Esophagus squamous epithelium (tissue), 5 donors: ENCODE measurements at regions of chr15 and their contacts with region 1.

Region 1: GRCh38 chr15:40219801-40220200 is 19.1 kb upstream of the PAK6 start:
- DNase-seq: no peak
- H3K4me3 ChIP-seq: no peak overlapping the region
- H3K27ac ChIP-seq: no peak overlapping the region
- H3K4me1 ChIP-seq: peaks cover 0 to 6% (median 0%) of the 10 kb centered on the region in 3 donors
- H3K27me3 ChIP-seq: no peaks in the 10 kb centered on the region
- CTCF ChIP-seq: no peak
- POLR2A ChIP-seq: no peak

Region 2: DNA sequence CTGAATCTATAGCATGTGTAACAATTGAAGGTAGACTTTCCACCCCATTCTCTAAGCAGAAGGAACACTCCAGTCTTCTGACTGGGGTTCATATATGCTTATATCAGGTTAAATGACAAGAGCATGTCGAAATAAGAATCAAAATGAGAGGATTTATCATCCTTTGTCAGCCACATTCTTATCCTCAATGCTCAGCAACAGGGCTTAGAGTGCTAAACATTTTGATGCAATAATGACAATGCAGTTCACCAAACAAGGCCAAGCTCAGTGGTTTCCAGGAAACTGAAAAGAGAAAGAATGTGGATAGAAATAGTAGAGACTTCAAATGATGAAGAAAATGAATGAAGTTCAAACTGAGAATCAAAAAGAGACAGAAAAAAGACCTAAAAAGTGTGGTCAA is 515.1 kb before region 1 on chr15:
- intact Hi-C with region 1: no loop called
- DNase-seq: no peak
- H3K4me3 ChIP-seq: no peak overlapping the region
- H3K27ac ChIP-seq: no peak overlapping the region
- H3K4me1 ChIP-seq: no peaks in the 10 kb centered on the region
- H3K27me3 ChIP-seq: no peaks in the 10 kb centered on the region
- CTCF ChIP-seq: no peak
- POLR2A ChIP-seq: no peak

Region 3: GRCh38 chr15:40108855-40109735 is 110.7 kb before region 1 on chr15 and contains the start of gene BMF:
- intact Hi-C with region 1: no loop called
- DNase-seq: peak; percentile 88
- H3K4me3 ChIP-seq: peak within 1 kb of the TSS; percentile 57 to 94 (median 70)
- H3K27ac ChIP-seq: peak within 1 kb of the TSS; percentile 83 to 93 (median 88)
- H3K4me1 ChIP-seq: peaks cover 39 to 55% (median 40%) of the 10 kb centered on the region in 3 donors
- H3K27me3 ChIP-seq: peaks cover 0 to 5% (median 0%) of the 10 kb centered on the region in 4 donors
- CTCF ChIP-seq: peak in 4 of 6 experiments; percentile 12 to 41 (median 18)
- POLR2A ChIP-seq: no peak
- total RNA-seq, gene BMF: 0.31 to 4.4 (median 1.4) TPM

Region 4: GRCh38 chr15:40274350-40275274 is 54.8 kb after region 1 on chr15:
- intact Hi-C with region 1: loop called (anchors 2 kb)
- DNase-seq: peak; percentile 42
- H3K4me3 ChIP-seq: no peak overlapping the region
- H3K27ac ChIP-seq: no peak overlapping the region
- H3K4me1 ChIP-seq: peaks cover 2 to 19% (median 3%) of the 10 kb centered on the region in 3 donors
- H3K27me3 ChIP-seq: peaks cover 0 to 22% (median 2%) of the 10 kb centered on the region in 4 donors
- CTCF ChIP-seq: peak; percentile 99 to 100 (median 100)
- POLR2A ChIP-seq: no peak

Region 5: GRCh38 chr15:40323239-40323952 is 103.6 kb after region 1 on chr15 and contains the start of gene INAFM2:
- intact Hi-C with region 1: no loop called
- DNase-seq: peak; percentile 53
- H3K4me3 ChIP-seq: peak within 1 kb of the TSS; percentile 63 to 86 (median 77)
- H3K27ac ChIP-seq: peak within 1 kb of the TSS; percentile 73 to 91 (median 82)
- H3K4me1 ChIP-seq: peaks cover 19 to 57% (median 27%) of the 10 kb centered on the region in 3 donors
- H3K27me3 ChIP-seq: peaks cover 0 to 17% (median 0%) of the 10 kb centered on the region in 4 donors
- CTCF ChIP-seq: peak; percentile 48 to 82 (median 68)
- POLR2A ChIP-seq: peak in 2 of 4 donors; percentile 47 to 54
- total RNA-seq, gene INAFM2: 4.7 to 10.1 (median 8.1) TPM